H1 (cell line): ENCODE measurements at regions of chr2 and their contacts with region 1.

Region 1: DNA sequence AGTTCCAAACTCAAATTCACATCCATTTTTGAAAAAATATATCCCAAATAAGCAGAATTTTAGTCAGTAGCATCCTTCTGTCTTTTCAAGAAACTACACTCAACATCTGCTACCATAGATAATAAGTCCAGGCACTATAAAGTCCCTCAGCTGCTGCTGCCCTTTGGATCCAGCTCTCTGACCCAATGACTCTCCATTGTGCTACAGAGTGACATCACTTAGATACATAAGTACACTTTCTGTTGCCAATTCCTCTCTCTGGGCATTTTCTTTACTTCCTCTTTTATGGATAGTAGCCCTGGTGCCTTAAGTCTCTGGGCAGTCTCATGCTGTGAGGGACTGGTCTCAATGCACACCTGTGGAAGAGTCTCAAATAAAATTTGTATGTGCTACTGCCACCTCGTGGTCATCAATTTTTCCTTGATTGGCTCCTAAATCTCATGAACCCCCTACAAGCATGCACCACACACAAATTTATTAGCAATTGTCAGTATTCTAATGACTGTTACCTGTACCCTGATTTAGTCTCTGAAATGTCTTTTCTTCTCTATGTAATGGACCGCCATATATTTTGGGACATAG is 219.2 kb downstream of the LRP1B start:
- DNase-seq: peak; percentile 21 to 57
- H3K4me3 ChIP-seq: no peak overlapping the region
- H3K27ac ChIP-seq: no peak overlapping the region
- H3K4me1 ChIP-seq: 0 out of 7 replicates have a peak, but pooled peaks cover 0 to 2% (median 0%) of the 10 kb centered on the region in 4 experiments
- H3K27me3 ChIP-seq: no peaks in the 10 kb centered on the region
- CTCF ChIP-seq: peak in 2 of 3 experiments; percentile 27 to 45; a peak in 2 of 4 replicates
- EP300 ChIP-seq: no peak
- POLR2A ChIP-seq: no peak
- RAD21 ChIP-seq: peak; percentile 60 to 68

Region 2: GRCh38 chr2:141923657-141924056 is 12.1 kb after region 1 on chr2:
- CTCF ChIA-PET with region 1: interaction called, 11 read pairs
- POLR2A ChIA-PET with region 1: no interaction called
- DNase-seq: no peak
- H3K4me3 ChIP-seq: no peak overlapping the region
- H3K27ac ChIP-seq: no peak overlapping the region
- H3K4me1 ChIP-seq: no peaks in the 10 kb centered on the region
- H3K27me3 ChIP-seq: no peaks in the 10 kb centered on the region
- CTCF ChIP-seq: no peak
- EP300 ChIP-seq: no peak
- POLR2A ChIP-seq: no peak
- RAD21 ChIP-seq: no peak